ENCODE measurements at regions of chr20 and their contacts with region 1.

Region 1: DNA sequence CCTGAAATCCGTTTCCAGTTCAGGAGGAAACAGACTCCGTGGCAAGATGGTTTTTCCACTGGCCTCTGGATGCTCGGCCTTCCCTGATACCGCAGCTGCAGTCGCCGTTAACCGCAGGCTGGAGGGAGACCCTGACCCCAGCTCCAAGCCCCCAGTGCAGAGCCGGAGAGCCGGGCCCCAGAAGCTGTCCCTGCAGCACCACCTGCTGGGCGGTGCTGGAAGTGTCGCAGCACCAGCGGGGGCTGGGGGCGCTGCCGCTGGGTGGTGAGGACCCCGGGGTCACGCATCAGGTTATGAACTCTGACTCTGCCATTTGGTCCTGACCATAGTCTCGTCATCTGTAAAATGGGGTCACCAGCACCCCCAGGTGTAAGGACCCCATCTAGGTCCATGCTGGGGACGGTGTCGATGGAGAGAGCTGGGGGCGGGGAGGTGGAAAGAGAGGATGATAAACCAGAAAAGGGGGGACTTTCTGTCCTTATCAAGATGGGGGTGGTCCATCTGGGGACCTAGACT is 20.7 kb upstream of the CHRNA4 start:
- DNase-seq: peak in 1 of 2 experiments; percentile 59
- ATAC-seq: peak in 1 of 2 experiments; percentile 70; a peak in 3 of 6 replicates
- H3K4me3 ChIP-seq: no peak overlapping the region
- H3K27ac ChIP-seq: no peak overlapping the region
- H3K4me1 ChIP-seq: no peaks in the 10 kb centered on the region
- CTCF ChIP-seq: peak; percentile 88
- EP300 ChIP-seq: no peak
- POLR2A ChIP-seq: no peak
- RAD21 ChIP-seq: peak; percentile 91 to 92

Region 2: GRCh38 chr20:63056236-63056948 is 325.5 kb before region 1 on chr20:
- CTCF ChIA-PET with region 1: interaction called, 28 read pairs
- POLR2A ChIA-PET with region 1: no interaction called
- DNase-seq: peak in 1 of 2 experiments; percentile 53
- ATAC-seq: peak; percentile 49 to 81
- H3K4me3 ChIP-seq: no peak overlapping the region
- H3K27ac ChIP-seq: no peak overlapping the region
- H3K4me1 ChIP-seq: 0 out of 3 replicates have a peak, but pooled peaks cover 3% of the 10 kb centered on the region
- CTCF ChIP-seq: peak; percentile 71
- EP300 ChIP-seq: no peak
- POLR2A ChIP-seq: no peak
- RAD21 ChIP-seq: peak; percentile 68 to 83

Region 3: GRCh38 chr20:63321136-63321831 is 60.6 kb before region 1 on chr20:
- CTCF ChIA-PET with region 1: interaction called, 15 read pairs
- POLR2A ChIA-PET with region 1: no interaction called
- DNase-seq: no peak
- ATAC-seq: peak; percentile 15 to 24; a peak in 3 of 6 replicates
- H3K4me3 ChIP-seq: no peak overlapping the region
- H3K27ac ChIP-seq: no peak overlapping the region
- H3K4me1 ChIP-seq: peaks cover 6% of the 10 kb centered on the region; the same call in 2 of the 3 replicates
- CTCF ChIP-seq: no peak
- EP300 ChIP-seq: no peak
- POLR2A ChIP-seq: no peak
- RAD21 ChIP-seq: no peak

Region 4: GRCh38 chr20:63360850-63361518 is 20.9 kb before region 1 on chr20 and contains the start of gene CHRNA4:
- CTCF ChIA-PET with region 1: interaction called, 30 read pairs
- POLR2A ChIA-PET with region 1: no interaction called
- DNase-seq: peak in 1 of 2 experiments; percentile 38
- ATAC-seq: peak in 1 of 2 experiments; percentile 29; a peak in 3 of 6 replicates
- H3K4me3 ChIP-seq: peak within 1 kb of the TSS; percentile 36
- H3K27ac ChIP-seq: peak within 1 kb of the TSS in 1 of 2 experiments; percentile 57; a peak in 3 of 6 replicates
- H3K4me1 ChIP-seq: 0 out of 3 replicates have a peak, but pooled peaks cover 4% of the 10 kb centered on the region
- CTCF ChIP-seq: no peak
- EP300 ChIP-seq: no peak
- POLR2A ChIP-seq: no peak
- RAD21 ChIP-seq: no peak
- polyA plus RNA-seq, gene CHRNA4: 0.03 and 0.09 TPM in 2 replicates

Region 5: GRCh38 chr20:63366390-63367365 is 15.2 kb before region 1 on chr20:
- CTCF ChIA-PET with region 1: interaction called, 30 read pairs
- POLR2A ChIA-PET with region 1: no interaction called
- DNase-seq: no peak
- ATAC-seq: no peak
- H3K4me3 ChIP-seq: no peak overlapping the region
- H3K27ac ChIP-seq: no peak overlapping the region
- H3K4me1 ChIP-seq: no peaks in the 10 kb centered on the region
- CTCF ChIP-seq: no peak
- EP300 ChIP-seq: no peak
- POLR2A ChIP-seq: no peak
- RAD21 ChIP-seq: no peak

Region 6: DNA sequence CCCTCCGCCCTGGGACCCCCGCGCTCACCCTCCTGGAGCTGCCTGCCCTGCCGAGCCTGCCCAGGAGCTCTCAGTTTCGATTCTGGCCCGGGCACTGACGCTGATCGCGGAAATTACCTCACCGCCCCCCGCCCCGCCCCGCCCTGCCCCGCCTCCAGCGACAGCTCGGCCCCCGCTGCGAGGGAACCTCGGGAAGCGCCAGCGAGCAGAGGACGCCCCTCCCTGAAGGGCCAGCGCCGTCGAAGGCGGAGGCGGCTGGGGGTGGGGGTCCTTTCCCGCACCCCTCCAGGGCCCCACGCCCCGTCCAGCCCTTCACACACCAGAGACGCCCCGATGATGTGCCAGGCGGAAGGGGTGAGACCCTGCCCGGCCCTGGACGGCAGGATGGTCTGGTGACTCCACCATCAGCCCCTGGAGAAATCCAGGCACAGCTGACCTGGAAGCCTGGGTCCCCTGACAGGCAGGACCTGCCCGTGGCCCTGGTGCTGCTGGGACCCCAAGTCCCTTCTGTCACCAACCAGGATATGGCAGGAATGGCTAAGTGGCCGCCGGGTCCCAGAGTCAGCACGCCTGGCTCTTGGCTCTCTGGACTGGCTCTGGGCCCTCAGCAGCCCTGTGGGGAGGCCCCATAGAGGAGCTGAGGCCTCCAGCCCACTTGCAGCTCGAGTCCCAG is 192.4 kb after region 1 on chr20 and contains the start of gene HELZ2:
- CTCF ChIA-PET with region 1: no interaction called
- POLR2A ChIA-PET with region 1: no interaction called
- DNase-seq: peak in 1 of 2 experiments; percentile 63
- ATAC-seq: peak; percentile 65 to 85
- H3K4me3 ChIP-seq: peak within 1 kb of the TSS; percentile 79
- H3K27ac ChIP-seq: peak within 1 kb of the TSS; percentile 77 to 93
- H3K4me1 ChIP-seq: peaks cover 20% of the 10 kb centered on the region; the same call in 2 of the 3 replicates
- CTCF ChIP-seq: no peak
- EP300 ChIP-seq: no peak
- POLR2A ChIP-seq: peak; percentile 36
- RAD21 ChIP-seq: no peak
- polyA plus RNA-seq, gene HELZ2: 3.2 and 4.9 TPM in 2 replicates